ENCODE measurements at regions of chr2 and their contacts with region 1.

Region 1: DNA sequence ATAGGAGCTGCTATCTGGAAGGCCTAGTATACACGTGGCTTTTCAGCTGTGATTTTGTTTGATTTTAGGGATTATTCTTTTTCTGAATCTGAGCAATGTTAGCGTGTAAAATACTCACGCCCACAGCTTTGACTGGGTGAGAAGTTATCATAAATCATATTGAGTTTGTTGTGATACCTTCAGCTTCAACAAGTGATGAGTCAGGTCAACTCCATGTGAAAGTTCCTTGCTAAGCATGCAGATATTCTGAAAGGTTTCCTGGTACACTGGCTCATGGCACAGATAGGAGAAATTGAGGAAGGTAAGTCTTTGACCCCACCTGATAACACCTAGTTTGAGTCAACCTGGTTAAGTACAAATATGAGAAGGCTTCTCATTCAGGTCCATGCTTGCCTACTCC is at the start of gene GKN1:
- DNase-seq: no peak
- total RNA-seq, gene GKN1: not detected

Region 2: DNA sequence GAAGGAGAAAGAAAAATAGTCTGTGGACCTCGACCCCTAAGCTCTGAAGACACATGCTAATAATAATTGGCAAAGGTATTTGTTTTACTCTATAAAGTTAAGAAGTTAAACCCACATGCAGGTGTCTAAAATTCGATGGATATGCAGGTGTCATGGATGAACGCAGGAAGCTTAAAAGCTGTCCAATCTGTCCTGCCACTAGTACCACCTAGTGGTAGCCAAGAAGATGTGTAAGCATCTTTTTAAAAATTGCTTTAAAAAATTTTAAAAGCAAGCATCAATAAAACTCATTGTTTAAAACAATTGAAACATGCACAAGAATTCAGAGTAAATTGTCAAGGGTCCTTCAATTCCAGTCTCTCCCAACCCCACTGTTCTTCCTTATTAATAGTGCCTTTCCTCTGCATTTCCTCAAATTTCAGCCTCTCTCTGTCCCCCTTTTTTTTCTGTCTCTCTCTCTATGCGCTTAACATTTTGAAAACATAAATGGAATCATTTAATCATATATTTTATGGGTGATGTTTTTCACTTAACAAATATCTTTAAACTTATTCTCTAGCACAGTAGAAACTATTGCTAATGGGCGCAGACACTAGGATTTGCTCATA is 691.3 kb before region 1 on chr2:
- intact Hi-C with region 1: no loop called
- DNase-seq: no peak

Region 3: DNA sequence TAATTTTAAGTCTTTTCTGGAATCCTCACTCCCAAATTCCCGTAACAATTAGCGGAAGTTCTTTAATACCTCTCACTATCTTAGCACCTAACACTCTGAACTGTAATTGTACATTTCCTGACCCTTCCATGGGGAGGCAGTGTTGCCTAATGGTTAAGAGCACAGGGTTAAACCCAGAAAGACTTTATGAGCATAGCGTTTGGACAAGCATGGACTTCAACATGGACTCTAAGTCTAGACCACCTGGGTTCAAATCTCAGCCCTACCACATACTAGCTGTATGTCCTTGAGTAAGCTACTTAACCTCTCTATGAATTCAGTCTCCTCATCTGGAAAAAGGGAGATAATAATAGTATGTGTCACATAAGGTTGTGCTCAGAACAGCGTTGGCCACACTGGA is 51.8 kb after region 1 on chr2:
- intact Hi-C with region 1: loop called in 1 of 2 experiments (anchors 2 kb)
- DNase-seq: no peak

Measured in posterior vena cava (tissue), 2 donors.